ENCODE measurements at regions of chr1 and their contacts with region 1.

Region 1: GRCh38 chr1:200473698-200474371 is 64.0 kb upstream of the ZNF281 start:
- DNase-seq: peak; percentile 69
- H3K4me3 Mint-ChIP-seq: peak overlapping the region; percentile 41
- H3K27ac Mint-ChIP-seq: peak overlapping the region; percentile 65
- H3K4me1 Mint-ChIP-seq: peaks cover 42% of the 10 kb centered on the region
- H3K27me3 Mint-ChIP-seq: peaks cover 13% of the 10 kb centered on the region

Region 2: DNA sequence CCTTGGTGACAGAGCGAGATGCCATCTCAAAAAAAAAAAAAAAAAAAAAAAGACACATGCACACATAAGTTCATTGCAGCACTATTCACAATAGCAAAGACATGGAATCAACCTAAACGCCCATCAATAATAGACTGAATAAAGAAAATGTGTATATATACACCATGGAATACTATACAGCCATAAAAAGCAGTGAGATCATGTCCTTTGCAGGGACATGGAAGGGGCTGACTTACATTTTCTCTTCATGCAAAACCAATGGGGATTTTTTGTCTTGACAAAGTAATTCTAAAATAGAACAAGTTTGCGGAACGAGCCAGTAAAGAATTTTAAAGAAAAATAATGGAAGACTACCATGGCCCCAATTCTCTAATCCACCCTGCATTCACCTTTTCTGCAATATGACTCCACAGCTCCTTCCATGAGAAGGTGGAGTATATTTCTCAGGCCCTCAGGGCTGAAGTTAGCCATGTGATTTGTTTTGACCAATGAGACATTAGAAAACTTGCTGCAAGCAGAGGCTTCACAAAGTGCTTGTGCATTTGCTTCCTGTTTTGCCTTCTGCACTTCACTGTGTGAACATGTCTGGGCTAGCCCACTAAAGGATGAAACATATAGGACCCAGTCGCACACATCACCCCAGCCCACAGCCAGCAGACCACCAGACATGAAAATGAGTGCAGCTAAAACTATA is 525.1 kb before region 1 on chr1:
- CTCF ChIA-PET with region 1: no interaction called
- POLR2A ChIA-PET with region 1: no interaction called
- intact Hi-C with region 1: loop called (anchors 5 kb)
- DNase-seq: no peak
- H3K4me3 Mint-ChIP-seq: no peak overlapping the region
- H3K27ac Mint-ChIP-seq: no peak overlapping the region
- H3K4me1 Mint-ChIP-seq: no peaks in the 10 kb centered on the region
- H3K27me3 Mint-ChIP-seq: peaks cover 34% of the 10 kb centered on the region

Region 3: GRCh38 chr1:199959515-199960110 is 514.2 kb before region 1 on chr1:
- CTCF ChIA-PET with region 1: no interaction called
- POLR2A ChIA-PET with region 1: no interaction called
- intact Hi-C with region 1: no loop called
- DNase-seq: no peak
- H3K4me3 Mint-ChIP-seq: no peak overlapping the region
- H3K27ac Mint-ChIP-seq: no peak overlapping the region
- H3K4me1 Mint-ChIP-seq: no peaks in the 10 kb centered on the region
- H3K27me3 Mint-ChIP-seq: peaks cover 5% of the 10 kb centered on the region

Region 4: GRCh38 chr1:200409761-200410565 is 63.9 kb before region 1 on chr1 and contains the start of gene ZNF281:
- CTCF ChIA-PET with region 1: no interaction called
- POLR2A ChIA-PET with region 1: interaction called, 4 read pairs
- intact Hi-C with region 1: loop called (anchors 1 kb)
- DNase-seq: peak; percentile 97
- H3K4me3 Mint-ChIP-seq: peak within 1 kb of the TSS; percentile 87
- H3K27ac Mint-ChIP-seq: peak within 1 kb of the TSS; percentile 88
- H3K4me1 Mint-ChIP-seq: peaks cover 49% of the 10 kb centered on the region
- H3K27me3 Mint-ChIP-seq: no peaks in the 10 kb centered on the region
- total RNA-seq, gene ZNF281: 11.0 to 11.2 TPM

Region 5: DNA sequence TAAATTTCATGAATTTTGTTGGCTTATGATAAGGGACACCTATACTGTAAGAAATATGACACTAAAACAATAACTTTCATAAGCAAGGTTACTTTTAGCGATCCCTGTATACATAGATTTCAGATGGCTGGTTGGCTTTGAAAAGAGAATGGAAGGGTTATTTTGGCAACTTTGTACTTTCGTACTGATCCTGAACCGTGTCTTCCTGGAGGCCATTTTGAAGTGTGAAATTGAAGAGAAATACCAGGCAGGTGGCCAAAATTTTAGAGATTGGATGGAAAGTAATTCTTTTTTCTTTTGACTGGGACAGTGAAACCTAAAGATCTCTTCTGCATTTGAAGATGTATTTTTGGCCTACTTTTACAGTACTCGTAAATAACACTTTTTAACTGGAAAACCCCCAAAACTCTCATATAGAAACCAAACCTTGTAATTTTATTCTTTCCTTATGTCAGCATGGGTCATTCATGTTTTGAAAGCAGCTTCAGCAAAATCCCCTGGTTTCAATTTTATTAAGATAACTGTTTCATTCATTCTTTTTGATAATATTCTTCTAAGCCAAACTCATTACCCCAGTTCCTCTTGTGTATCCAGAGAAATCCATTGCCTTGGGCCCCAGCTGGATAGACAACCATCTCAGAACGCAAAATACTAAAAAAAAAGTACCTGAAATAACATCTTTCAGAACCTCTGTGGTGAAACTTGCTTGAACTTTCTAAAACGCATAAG is 25.6 kb before region 1 on chr1:
- CTCF ChIA-PET with region 1: interaction called, 5 read pairs
- POLR2A ChIA-PET with region 1: interaction called, 8 read pairs
- intact Hi-C with region 1: loop called (anchors 1 kb)
- DNase-seq: peak; percentile 24
- H3K4me3 Mint-ChIP-seq: peak overlapping the region; percentile 38
- H3K27ac Mint-ChIP-seq: peak overlapping the region; percentile 87
- H3K4me1 Mint-ChIP-seq: peaks cover 41% of the 10 kb centered on the region
- H3K27me3 Mint-ChIP-seq: no peaks in the 10 kb centered on the region

Region 6: GRCh38 chr1:200877839-200878551 is 404.2 kb after region 1 on chr1:
- CTCF ChIA-PET with region 1: no interaction called
- POLR2A ChIA-PET with region 1: no interaction called
- intact Hi-C with region 1: loop called (anchors 5 kb)
- DNase-seq: peak; percentile 89
- H3K4me3 Mint-ChIP-seq: no peak overlapping the region
- H3K27ac Mint-ChIP-seq: no peak overlapping the region
- H3K4me1 Mint-ChIP-seq: peaks cover 56% of the 10 kb centered on the region
- H3K27me3 Mint-ChIP-seq: peaks cover 33% of the 10 kb centered on the region